ENCODE measurements at regions of chr1 and their contacts with region 1.

Region 1: DNA sequence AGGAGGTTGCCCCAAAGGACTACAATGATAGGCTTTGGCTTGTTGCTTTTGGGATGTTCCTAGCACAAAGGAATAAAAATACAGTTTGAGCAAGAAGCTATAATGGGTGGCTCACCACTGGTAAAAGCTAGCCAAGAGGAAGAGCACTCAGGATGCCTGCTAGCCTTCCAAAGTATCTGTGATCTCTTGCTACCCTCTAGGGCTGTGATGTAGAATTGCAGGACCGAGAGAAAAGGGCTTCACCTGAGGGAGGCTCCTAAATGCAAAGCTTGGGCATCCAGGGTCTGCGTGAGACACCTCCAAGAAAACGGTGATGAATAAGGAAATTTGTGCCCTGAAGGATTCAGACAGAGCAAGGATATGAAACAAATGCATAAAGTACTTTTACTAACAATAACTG is 17.7 kb downstream of the IVL start:
- DNase-seq: peak; percentile 87
- H3K4me3 ChIP-seq: no peak overlapping the region
- H3K27ac ChIP-seq: no peak overlapping the region
- H3K4me1 ChIP-seq: no peaks in the 10 kb centered on the region
- H3K27me3 ChIP-seq: no peaks in the 10 kb centered on the region

Region 2: DNA sequence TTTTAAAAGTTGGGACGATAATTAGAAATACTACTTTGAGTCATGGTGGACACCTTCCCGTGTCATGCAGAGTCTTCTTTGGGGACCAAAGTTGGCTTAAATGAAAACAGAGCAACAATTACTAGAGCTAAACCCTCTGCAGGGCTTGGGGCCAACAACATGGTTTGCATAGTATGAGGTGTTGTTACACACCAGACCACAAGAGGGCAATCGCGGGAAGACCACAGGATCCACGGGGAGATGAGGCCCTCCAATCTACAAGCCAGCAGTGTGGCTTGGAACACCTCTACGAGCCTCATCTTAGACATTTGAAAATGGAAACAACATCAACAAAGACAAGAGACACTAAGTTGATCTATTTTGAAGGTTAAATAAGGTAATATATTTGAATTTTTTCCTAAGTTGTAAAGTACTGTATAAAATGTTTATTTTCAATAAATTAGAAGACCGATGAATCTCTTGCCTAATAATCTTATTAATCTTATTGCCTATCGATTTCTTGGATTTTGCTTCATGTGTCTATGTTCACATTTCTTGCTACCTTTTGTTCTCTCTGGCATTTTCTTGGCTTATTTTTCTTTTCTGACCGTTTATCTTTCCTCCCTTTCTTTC is 56.2 kb before region 1 on chr1:
- in situ Hi-C with region 1: loop called (anchors 5 kb)
- DNase-seq: peak; percentile 87
- H3K4me3 ChIP-seq: no peak overlapping the region
- H3K27ac ChIP-seq: no peak overlapping the region
- H3K4me1 ChIP-seq: peaks cover 13% of the 10 kb centered on the region
- H3K27me3 ChIP-seq: no peaks in the 10 kb centered on the region

Region 3: GRCh38 chr1:153727463-153728304 is 801.6 kb after region 1 on chr1 and contains the start of gene INTS3:
- in situ Hi-C with region 1: no loop called
- DNase-seq: peak; percentile 100
- H3K4me3 ChIP-seq: peak within 1 kb of the TSS; percentile 96
- H3K27ac ChIP-seq: peak within 1 kb of the TSS; percentile 78
- H3K4me1 ChIP-seq: 0 out of 2 replicates have a peak, but pooled peaks cover 9% of the 10 kb centered on the region
- H3K27me3 ChIP-seq: no peaks in the 10 kb centered on the region
- total RNA-seq, gene INTS3: 40.2 and 41.5 TPM in 2 replicates